ENCODE measurements at regions of chr1 and their contacts with region 1.

Region 1: DNA sequence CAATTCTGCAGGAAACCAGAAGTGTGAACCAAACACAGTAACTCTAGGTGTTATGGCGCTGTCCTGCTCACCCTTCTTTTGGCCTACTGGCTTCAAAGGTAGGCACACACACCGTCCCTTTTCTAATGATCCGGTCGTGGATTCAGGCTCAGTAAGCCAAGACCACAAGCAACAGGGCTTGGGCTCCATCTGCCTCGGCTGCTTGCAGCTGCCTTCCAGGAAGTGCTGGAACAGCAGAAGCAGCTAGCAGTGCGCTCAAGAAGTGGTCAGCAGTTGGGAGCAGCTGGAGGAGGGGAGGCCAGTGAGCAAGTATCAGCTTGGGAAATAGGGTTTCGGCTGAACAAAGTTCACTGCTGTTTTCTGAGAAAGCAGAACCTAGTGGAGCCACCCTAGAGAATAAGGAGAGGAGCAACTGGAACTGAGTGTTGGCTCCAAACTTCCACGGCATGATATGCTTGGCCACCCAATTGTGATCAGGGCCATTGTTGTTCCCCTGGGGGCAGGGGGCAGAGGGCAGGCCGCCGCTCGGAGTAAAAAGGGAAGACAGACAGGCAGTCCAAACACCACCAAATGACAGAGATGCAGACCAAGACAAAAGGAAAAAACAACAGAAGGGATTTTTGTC is 173.4 kb downstream of the TOMM20 start:
- H3K4me3 Mint-ChIP-seq: peak overlapping the region; percentile 61
- H3K27ac Mint-ChIP-seq: peak overlapping the region; percentile 98
- H3K4me1 Mint-ChIP-seq: peaks cover 77% of the 10 kb centered on the region
- H3K27me3 Mint-ChIP-seq: no peaks in the 10 kb centered on the region

Region 2: DNA sequence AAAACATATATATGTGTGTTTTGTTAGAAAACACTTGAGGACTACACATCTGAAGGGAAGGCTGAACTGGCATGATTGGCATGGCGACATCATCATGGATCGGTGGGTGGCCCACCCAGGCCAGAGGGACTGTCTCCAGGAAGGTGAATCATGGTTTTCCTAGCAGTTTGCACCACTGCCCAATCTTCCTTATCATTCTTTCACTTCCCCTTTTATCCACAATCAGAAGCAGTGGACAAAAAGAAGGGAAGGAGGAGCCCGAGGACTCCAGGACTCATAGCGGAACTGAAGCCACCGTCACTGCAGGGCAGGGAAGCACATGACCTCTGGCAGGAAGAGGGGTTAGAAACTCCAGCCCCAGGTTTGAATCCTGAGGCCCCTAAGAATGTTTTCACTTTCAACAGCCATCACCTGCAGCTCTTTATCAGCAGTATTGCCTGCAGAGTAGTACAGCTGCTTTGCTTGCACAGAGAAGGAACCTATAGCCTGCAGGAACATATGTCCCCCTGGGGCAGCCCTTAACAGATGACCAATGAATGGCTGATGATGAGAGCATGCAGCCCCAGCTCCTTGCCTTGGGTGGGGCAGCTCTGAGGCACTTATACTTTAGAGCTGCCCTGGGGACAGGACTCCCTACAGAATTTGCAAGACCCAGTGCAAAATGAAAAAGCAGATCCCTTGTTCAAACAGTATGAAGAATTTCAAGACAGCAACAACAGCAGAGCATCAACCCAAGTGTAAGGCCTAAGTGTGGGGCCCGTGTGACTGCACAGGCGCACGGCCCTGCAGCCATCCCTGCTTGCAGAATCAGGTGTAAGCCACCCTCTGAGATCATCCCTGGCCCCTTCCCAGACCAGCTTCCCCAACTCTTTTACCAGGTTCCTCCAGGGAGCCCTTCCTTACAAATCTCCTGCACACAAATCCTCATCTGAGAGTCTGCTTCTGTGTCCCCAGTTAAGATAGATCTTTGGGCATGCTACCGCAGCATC is 103.5 kb before region 1 on chr1:
- intact Hi-C with region 1: loop called (anchors 2 kb)
- H3K4me3 Mint-ChIP-seq: peak overlapping the region; percentile 9
- H3K27ac Mint-ChIP-seq: peak overlapping the region; percentile 96
- H3K4me1 Mint-ChIP-seq: peaks cover 91% of the 10 kb centered on the region
- H3K27me3 Mint-ChIP-seq: no peaks in the 10 kb centered on the region

Region 3: GRCh38 chr1:234925440-234926263 is 29.6 kb before region 1 on chr1:
- intact Hi-C with region 1: loop called (anchors 2 kb)
- H3K4me3 Mint-ChIP-seq: peak overlapping the region; percentile 7
- H3K27ac Mint-ChIP-seq: peak overlapping the region; percentile 97
- H3K4me1 Mint-ChIP-seq: peaks cover 89% of the 10 kb centered on the region
- H3K27me3 Mint-ChIP-seq: no peaks in the 10 kb centered on the region

Region 4: DNA sequence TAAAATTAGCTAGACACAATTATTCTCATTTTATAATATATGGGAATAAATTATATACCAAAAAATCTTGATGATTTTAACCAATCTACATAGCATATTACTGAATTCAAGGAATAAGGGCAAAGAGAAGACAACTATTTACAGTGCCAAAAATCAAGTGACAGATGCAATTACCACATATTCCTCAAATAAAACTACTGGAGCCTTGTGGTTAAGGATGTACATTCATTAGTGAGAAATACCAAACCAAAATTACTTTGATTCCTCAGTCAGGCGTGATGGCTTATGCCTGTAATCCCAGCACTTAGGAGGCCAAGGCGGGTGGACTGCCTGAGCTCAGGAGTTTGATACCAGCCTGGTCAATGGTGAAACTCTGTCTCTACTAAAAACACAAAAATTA is 274.6 kb after region 1 on chr1:
- intact Hi-C with region 1: no loop called
- H3K4me3 Mint-ChIP-seq: no peak overlapping the region
- H3K27ac Mint-ChIP-seq: no peak overlapping the region
- H3K4me1 Mint-ChIP-seq: no peaks in the 10 kb centered on the region
- H3K27me3 Mint-ChIP-seq: no peaks in the 10 kb centered on the region

Measured in dendritic cell treated with granulocyte-macrophage colony-stimulating factor and Interleukin-4, amounts not matched to agents 40 ng/mL and 50 ng/mL, for 4 days (primary cell).